ENCODE measurements at regions of chr11 and their contacts with region 1.

Region 1: DNA sequence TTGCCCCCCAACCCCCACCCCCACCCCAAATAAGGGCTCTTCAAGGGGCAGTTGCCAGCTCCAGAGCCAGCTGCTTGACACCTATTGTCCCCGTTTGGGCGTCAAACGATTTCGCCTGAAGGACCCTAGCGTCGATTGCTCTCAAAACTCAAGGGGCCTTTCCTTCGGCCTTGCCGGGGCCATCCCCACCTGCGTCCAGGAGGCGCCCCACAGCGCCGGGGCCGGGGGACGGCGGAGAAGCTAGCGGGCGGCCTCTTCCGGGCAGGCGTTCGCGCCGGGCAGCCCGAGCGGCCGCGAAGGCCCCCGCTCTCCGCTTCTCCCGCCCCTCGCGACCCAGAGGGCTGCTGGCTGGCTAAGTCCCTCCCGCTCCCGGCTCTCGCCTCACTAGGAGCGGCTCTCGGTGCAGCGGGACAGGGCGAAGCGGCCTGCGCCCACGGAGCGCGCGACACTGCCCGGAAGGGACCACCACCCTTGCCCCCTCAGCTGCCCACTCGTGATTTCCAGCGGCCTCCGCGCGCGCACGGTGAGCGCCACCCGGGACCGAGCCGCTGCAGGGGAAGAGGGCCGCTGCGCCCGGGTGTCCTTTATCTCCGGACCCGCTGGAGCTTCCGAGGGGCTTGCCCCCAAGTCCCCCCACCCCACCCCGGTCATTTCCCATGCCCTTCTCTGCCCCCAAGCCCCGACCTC is at the start of gene CAPRIN1:
- DNase-seq: peak; percentile 89 to 91
- ATAC-seq: peak; percentile 84
- total RNA-seq, gene CAPRIN1: 150 to 166 TPM

Region 2: GRCh38 chr11:33716236-33716635 is 335.3 kb before region 1 on chr11:
- intact Hi-C with region 1: no loop called
- DNase-seq: no peak
- ATAC-seq: peak; percentile 50

Region 3: GRCh38 chr11:34105079-34105956 is 53.8 kb after region 1 on chr11 and contains the start of gene NAT10:
- intact Hi-C with region 1: loop called in 1 of 2 experiments (anchors 5 kb)
- DNase-seq: peak; percentile 98
- ATAC-seq: peak; percentile 93
- total RNA-seq, gene NAT10: 22.5 to 30.6 TPM

Region 4: DNA sequence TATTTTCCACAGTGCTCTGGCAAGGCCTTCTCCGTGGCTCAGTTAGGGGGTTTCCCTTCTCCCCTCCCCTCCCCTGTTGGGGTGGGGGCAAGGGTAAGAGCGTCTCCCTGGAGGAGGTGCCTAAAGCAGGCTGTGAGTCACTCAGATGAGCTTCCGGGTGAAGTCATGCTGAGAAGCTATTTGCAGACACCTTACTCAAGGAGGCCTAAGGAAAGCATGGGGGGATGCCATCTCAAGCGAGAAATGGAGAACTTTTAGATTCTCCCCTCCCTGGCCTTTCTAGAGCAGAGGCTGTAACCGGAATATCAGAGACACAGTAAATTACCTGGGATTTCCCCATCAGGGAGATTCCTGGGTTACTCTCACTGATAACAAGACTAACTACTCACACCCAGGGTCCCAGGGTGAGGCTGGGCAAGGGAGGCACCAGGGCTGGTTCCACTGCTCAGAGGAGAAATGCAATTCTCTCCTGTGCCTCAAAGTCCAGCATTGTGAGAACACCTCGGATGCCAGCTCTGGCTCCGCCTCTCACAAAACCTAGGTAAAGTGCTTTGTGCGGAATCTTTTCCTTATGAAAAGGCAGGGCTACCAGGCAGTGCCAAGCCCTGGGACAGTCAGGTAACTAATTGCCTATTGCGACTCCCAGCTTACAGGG is 182.7 kb after region 1 on chr11:
- intact Hi-C with region 1: no loop called
- DNase-seq: peak; percentile 75 to 84
- ATAC-seq: peak; percentile 95